Lower leg skin (tissue), 4 donors: ENCODE measurements at regions of chr5 and their contacts with region 1.

Region 1: GRCh38 chr5:13783726-13784125 is 160.8 kb downstream of the DNAH5 start:
- DNase-seq: no peak
- H3K4me3 ChIP-seq: no peak overlapping the region
- CTCF ChIP-seq: no peak
- POLR2A ChIP-seq: no peak

Region 2: GRCh38 chr5:13045897-13046551 is 737.7 kb before region 1 on chr5:
- intact Hi-C with region 1: loop called (anchors 10 kb)
- DNase-seq: no peak
- H3K4me3 ChIP-seq: no peak overlapping the region
- CTCF ChIP-seq: no peak
- POLR2A ChIP-seq: no peak

Region 3: GRCh38 chr5:13735686-13736085 is 48.0 kb before region 1 on chr5:
- intact Hi-C with region 1: no loop called
- DNase-seq: no peak
- H3K4me3 ChIP-seq: no peak overlapping the region
- CTCF ChIP-seq: no peak
- POLR2A ChIP-seq: no peak

Region 4: GRCh38 chr5:13809921-13810320 is 26.2 kb after region 1 on chr5:
- intact Hi-C with region 1: no loop called
- DNase-seq: no peak
- H3K4me3 ChIP-seq: no peak overlapping the region
- CTCF ChIP-seq: no peak
- POLR2A ChIP-seq: no peak